ENCODE measurements at regions of chr5 and their contacts with region 1.

Region 1: GRCh38 chr5:144183254-144183889 is 12.7 kb downstream of the KCTD16 start:
- DNase-seq: peak in 3 of 5 donors; percentile 28 to 42 (median 38)
- H3K4me3 ChIP-seq: no peak overlapping the region
- H3K4me3 Mint-ChIP-seq: no peak overlapping the region
- H3K27ac ChIP-seq: no peak overlapping the region
- H3K27ac Mint-ChIP-seq: no peak overlapping the region
- H3K4me1 ChIP-seq: peaks cover 49% of the 10 kb centered on the region
- H3K4me1 Mint-ChIP-seq: peaks cover 16 to 35% (median 30%) of the 10 kb centered on the region in 4 donors
- H3K27me3 ChIP-seq: no peaks in the 10 kb centered on the region
- H3K27me3 Mint-ChIP-seq: no peaks in the 10 kb centered on the region

Region 2: GRCh38 chr5:143309661-143310431 is 873.5 kb before region 1 on chr5:
- CTCF ChIA-PET with region 1: no interaction called
- POLR2A ChIA-PET with region 1: no interaction called
- intact Hi-C with region 1: loop called (anchors 5 kb)
- DNase-seq: no peak
- H3K4me3 ChIP-seq: no peak overlapping the region
- H3K4me3 Mint-ChIP-seq: no peak overlapping the region
- H3K27ac ChIP-seq: no peak overlapping the region
- H3K27ac Mint-ChIP-seq: no peak overlapping the region
- H3K4me1 ChIP-seq: peaks cover 3% of the 10 kb centered on the region
- H3K4me1 Mint-ChIP-seq: peaks cover 16 to 38% (median 25%) of the 10 kb centered on the region in 4 donors
- H3K27me3 ChIP-seq: no peaks in the 10 kb centered on the region
- H3K27me3 Mint-ChIP-seq: no peaks in the 10 kb centered on the region

Region 3: GRCh38 chr5:144104110-144104509 is 79.3 kb before region 1 on chr5:
- CTCF ChIA-PET with region 1: no interaction called
- POLR2A ChIA-PET with region 1: no interaction called
- intact Hi-C with region 1: no loop called
- DNase-seq: no peak
- H3K4me3 ChIP-seq: no peak overlapping the region
- H3K4me3 Mint-ChIP-seq: no peak overlapping the region
- H3K27ac ChIP-seq: no peak overlapping the region
- H3K27ac Mint-ChIP-seq: no peak overlapping the region
- H3K4me1 ChIP-seq: no peaks in the 10 kb centered on the region
- H3K4me1 Mint-ChIP-seq: no peaks in the 10 kb centered on the region
- H3K27me3 ChIP-seq: peaks cover 4% of the 10 kb centered on the region
- H3K27me3 Mint-ChIP-seq: peaks cover 5 to 8% of the 10 kb centered on the region in 2 donors

Region 4: GRCh38 chr5:144170276-144171024 is 12.9 kb before region 1 on chr5 and contains the starts of genes KCTD16 and YIPF5:
- CTCF ChIA-PET with region 1: interaction called, 138 read pairs
- POLR2A ChIA-PET with region 1: interaction called, 150 read pairs
- intact Hi-C with region 1: loop called (anchors 1 kb)
- DNase-seq: peak; percentile 96 to 99 (median 98)
- H3K4me3 ChIP-seq: peak within 1 kb of the TSS; percentile 66 to 97
- H3K4me3 Mint-ChIP-seq: peak within 1 kb of the TSS; percentile 84 to 98 (median 93)
- H3K27ac ChIP-seq: peak within 1 kb of the TSS; percentile 92
- H3K27ac Mint-ChIP-seq: peak within 1 kb of the TSS; percentile 90 to 99 (median 94)
- H3K4me1 ChIP-seq: peaks cover 44% of the 10 kb centered on the region
- H3K4me1 Mint-ChIP-seq: peaks cover 27 to 50% (median 45%) of the 10 kb centered on the region in 4 donors
- H3K27me3 ChIP-seq: no peaks in the 10 kb centered on the region
- H3K27me3 Mint-ChIP-seq: no peaks in the 10 kb centered on the region
- total RNA-seq, gene KCTD16: 0.14 to 0.20 TPM
- total RNA-seq, gene YIPF5: 50.5 to 56.3 TPM

Measured in CD4-positive, alpha-beta memory T cell (primary cell).